Activated CD4-positive, alpha-beta memory T cell treated with anti-CD3 and anti-CD28 coated beads for 36 hours (primary cell): ENCODE measurements at regions of chr18 and their contacts with region 1.

Region 1: GRCh38 chr18:23918401-23919032 is 96.0 kb upstream of the TTC39C start:
- DNase-seq: peak; percentile 83
- H3K4me3 Mint-ChIP-seq: no peak overlapping the region
- H3K27ac Mint-ChIP-seq: no peak overlapping the region
- H3K4me1 Mint-ChIP-seq: peaks cover 16% of the 10 kb centered on the region
- H3K27me3 Mint-ChIP-seq: no peaks in the 10 kb centered on the region

Region 2: DNA sequence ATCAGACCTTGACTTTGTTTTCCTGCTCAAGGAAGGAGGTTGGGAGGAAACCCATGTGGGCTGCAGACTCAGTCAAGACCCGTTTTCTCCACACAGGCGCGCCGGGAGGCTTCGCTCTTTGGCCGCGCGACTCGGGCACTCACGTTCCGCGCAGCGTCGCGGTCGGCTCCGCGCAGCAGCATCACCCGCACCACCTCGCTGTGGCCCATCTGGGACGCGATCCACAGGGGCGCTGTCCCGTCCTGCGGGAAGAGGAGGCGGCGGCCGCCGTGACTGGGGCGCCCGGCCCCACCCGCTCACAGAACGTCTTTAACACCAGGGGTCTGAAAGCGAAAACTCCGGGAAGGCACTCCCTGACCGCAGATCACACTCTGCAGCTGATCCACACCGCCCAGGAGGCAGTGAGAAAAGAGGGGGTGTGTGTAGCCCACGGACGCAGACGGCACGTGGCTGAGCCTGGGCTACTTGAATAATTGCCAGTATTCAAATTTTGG is 299.1 kb before region 1 on chr18:
- CTCF ChIA-PET with region 1: interaction called, 10 read pairs
- POLR2A ChIA-PET with region 1: no interaction called
- intact Hi-C with region 1: loop called (anchors 2 kb)
- DNase-seq: peak; percentile 15
- H3K4me3 Mint-ChIP-seq: peak overlapping the region; percentile 48
- H3K27ac Mint-ChIP-seq: no peak overlapping the region
- H3K4me1 Mint-ChIP-seq: peaks cover 7% of the 10 kb centered on the region
- H3K27me3 Mint-ChIP-seq: peaks cover 30% of the 10 kb centered on the region

Region 3: GRCh38 chr18:23861805-23862470 is 56.6 kb before region 1 on chr18:
- CTCF ChIA-PET with region 1: interaction called, 6 read pairs
- POLR2A ChIA-PET with region 1: no interaction called
- intact Hi-C with region 1: loop called (anchors 10 kb)
- DNase-seq: no peak
- H3K4me3 Mint-ChIP-seq: no peak overlapping the region
- H3K27ac Mint-ChIP-seq: no peak overlapping the region
- H3K4me1 Mint-ChIP-seq: peaks cover 32% of the 10 kb centered on the region
- H3K27me3 Mint-ChIP-seq: no peaks in the 10 kb centered on the region

Region 4: GRCh38 chr18:23934252-23934651 is 15.7 kb after region 1 on chr18:
- CTCF ChIA-PET with region 1: interaction called, 42 read pairs
- POLR2A ChIA-PET with region 1: no interaction called
- intact Hi-C with region 1: no loop called
- DNase-seq: no peak
- H3K4me3 Mint-ChIP-seq: no peak overlapping the region
- H3K27ac Mint-ChIP-seq: no peak overlapping the region
- H3K4me1 Mint-ChIP-seq: peaks cover 57% of the 10 kb centered on the region
- H3K27me3 Mint-ChIP-seq: peaks cover 2% of the 10 kb centered on the region

Region 5: DNA sequence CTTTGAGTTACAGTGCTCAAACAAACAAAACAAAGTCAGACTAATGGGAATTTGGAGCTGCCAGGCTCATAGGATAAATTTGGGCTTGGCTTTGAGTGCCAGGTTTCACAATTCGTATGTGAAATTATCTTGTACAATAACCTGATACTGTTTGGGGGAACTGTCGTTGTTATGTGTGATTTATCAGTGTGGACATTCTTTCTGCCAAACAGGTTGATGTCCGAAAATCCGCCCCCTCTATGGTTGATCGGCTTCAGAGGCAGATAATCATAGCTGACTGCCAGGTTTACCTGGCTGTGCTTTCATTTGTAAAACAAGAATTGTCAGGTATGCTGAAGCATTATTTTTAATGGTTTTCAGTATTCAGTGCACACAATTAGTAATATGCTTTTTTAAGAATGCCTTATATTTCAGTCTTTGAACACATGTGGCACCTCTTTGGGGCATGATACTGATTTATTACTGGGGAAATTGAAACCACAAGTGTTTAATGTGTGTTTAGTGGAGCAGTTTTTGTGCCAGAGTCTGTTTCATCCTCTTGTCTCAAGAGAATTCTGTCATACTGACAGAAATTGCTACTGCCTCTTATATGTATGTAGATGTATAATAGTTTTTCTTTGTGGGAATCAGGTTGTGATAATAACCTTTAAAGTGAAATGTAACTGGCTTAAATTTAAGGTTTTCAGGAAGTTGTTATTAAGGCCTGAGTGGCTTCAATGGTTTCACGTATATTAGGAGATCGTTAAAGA is 150.6 kb after region 1 on chr18:
- CTCF ChIA-PET with region 1: no interaction called
- POLR2A ChIA-PET with region 1: no interaction called
- intact Hi-C with region 1: no loop called
- DNase-seq: no peak
- H3K4me3 Mint-ChIP-seq: no peak overlapping the region
- H3K27ac Mint-ChIP-seq: no peak overlapping the region
- H3K4me1 Mint-ChIP-seq: peaks cover 58% of the 10 kb centered on the region
- H3K27me3 Mint-ChIP-seq: no peaks in the 10 kb centered on the region

Region 6: DNA sequence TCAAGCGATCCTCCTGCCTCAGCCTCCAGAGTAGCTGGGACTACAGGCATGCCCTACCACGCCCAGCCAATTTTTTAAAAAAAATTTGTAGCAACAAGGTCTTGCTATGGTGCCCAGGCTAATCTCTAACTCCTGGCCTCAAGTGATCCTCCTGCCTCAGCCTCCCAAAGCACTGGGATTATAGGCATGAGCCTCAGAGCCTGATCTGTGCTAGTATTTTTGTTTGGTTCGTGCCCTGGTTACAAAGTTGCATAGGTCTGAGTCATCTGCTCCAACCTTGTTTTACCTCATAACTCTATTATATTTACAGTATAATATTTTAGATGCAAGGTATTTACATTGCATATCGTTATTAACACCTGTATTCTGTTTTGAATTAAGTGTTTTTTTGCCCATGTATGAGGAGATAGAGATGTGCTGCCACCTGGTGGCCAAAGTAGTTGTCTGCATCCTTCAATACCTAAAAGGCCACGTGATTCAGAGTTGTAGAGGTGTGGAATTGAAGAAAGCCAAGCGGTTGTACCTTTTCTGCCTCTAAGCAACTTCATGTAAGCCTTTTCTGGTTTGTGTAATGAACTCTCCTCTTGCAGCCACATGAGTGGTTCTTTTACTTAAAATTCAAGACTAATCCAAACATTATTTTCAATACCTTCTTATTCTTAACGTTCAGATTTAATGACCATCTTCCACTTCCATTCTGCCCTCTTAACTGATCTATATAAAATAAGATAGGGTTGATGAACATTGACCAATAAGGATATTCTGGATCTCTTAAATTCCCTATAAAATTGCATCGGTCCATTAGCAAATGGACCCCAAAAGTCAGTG is 200.4 kb after region 1 on chr18:
- CTCF ChIA-PET with region 1: interaction called, 14 read pairs
- POLR2A ChIA-PET with region 1: no interaction called
- intact Hi-C with region 1: loop called (anchors 2 kb)
- DNase-seq: peak; percentile 85
- H3K4me3 Mint-ChIP-seq: no peak overlapping the region
- H3K27ac Mint-ChIP-seq: peak overlapping the region; percentile 49
- H3K4me1 Mint-ChIP-seq: peaks cover 26% of the 10 kb centered on the region
- H3K27me3 Mint-ChIP-seq: no peaks in the 10 kb centered on the region

Region 7: GRCh38 chr18:24293254-24293653 is 374.7 kb after region 1 on chr18:
- CTCF ChIA-PET with region 1: no interaction called
- POLR2A ChIA-PET with region 1: no interaction called
- intact Hi-C with region 1: no loop called
- DNase-seq: no peak
- H3K4me3 Mint-ChIP-seq: no peak overlapping the region
- H3K27ac Mint-ChIP-seq: no peak overlapping the region
- H3K4me1 Mint-ChIP-seq: peaks cover 3% of the 10 kb centered on the region
- H3K27me3 Mint-ChIP-seq: no peaks in the 10 kb centered on the region